Dendritic cell treated with granulocyte-macrophage colony-stimulating factor and Interleukin-4, amounts not matched to agents 40 ng/mL and 50 ng/mL, for 4 days (primary cell): ENCODE measurements at regions of chr19 and their contacts with region 1.

Region 1: GRCh38 chr19:57389730-57390598 is at the start of gene ZNF548:
- H3K4me3 Mint-ChIP-seq: peak within 1 kb of the TSS; percentile 86
- H3K27ac Mint-ChIP-seq: peak within 1 kb of the TSS; percentile 89
- H3K4me1 Mint-ChIP-seq: peaks cover 18% of the 10 kb centered on the region
- H3K27me3 Mint-ChIP-seq: peaks cover 4% of the 10 kb centered on the region

Region 2: DNA sequence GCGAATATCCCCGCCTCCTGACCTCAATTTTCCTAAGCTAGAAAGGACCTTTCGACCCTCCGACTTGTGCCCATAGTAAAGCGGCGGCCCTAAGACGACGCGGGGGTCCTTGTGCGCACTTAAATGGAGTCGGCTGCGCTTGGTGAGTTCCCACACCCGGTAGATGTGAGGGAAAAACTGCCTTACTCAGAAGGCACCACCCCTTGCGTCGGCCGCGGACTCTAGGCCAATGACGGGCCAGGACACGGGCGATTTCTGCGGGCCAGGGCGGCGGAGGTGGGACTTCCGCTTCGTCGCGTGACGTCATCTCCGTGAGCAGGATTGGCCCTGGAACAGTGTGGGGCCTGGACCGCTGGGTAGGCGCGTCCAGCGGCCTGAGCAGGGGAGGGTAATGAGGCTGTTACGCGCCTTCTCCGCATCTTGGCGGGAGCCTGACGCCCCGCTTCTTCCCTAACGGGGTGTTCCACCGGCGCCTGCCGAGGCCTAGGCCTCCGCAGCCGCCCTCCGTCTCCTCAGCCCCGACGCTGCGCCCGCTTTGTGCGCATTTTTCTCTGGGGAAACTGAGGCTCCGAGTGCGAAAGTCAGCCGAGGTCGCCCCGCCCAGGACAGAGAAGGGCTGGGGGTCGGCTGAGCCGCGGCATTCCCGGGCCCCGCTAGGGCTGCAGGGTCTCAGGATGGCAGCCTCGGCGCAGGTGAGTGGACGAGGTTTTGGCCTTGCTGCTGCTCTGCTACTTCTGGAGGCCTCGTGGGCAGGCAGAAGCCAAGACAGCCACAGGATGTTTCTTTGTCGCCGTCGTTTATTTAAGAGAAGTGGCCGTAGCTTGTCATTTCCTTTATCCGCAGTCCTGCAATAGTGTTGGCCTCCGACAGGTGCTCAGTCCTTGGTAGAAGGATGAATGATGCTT is 69.5 kb before region 1 on chr19 and contains the start of gene ZNF543:
- intact Hi-C with region 1: loop called (anchors 1 kb)
- H3K4me3 Mint-ChIP-seq: peak within 1 kb of the TSS; percentile 81
- H3K27ac Mint-ChIP-seq: peak within 1 kb of the TSS; percentile 95
- H3K4me1 Mint-ChIP-seq: peaks cover 27% of the 10 kb centered on the region
- H3K27me3 Mint-ChIP-seq: peaks cover 33% of the 10 kb centered on the region

Region 3: GRCh38 chr19:57410877-57411671 is 21.1 kb after region 1 on chr19 and contains the start of gene ZNF17:
- intact Hi-C with region 1: loop called (anchors 1 kb)
- H3K4me3 Mint-ChIP-seq: peak within 1 kb of the TSS; percentile 95
- H3K27ac Mint-ChIP-seq: peak within 1 kb of the TSS; percentile 87
- H3K4me1 Mint-ChIP-seq: peaks cover 11% of the 10 kb centered on the region
- H3K27me3 Mint-ChIP-seq: no peaks in the 10 kb centered on the region